ENCODE measurements at regions of chr1 and their contacts with region 1.

Region 1: GRCh38 chr1:154335025-154335714 is 9.8 kb downstream of the ATP8B2 start:
- H3K4me3 ChIP-seq: no peak overlapping the region
- H3K27ac ChIP-seq: no peak overlapping the region
- H3K4me1 ChIP-seq: no peaks in the 10 kb centered on the region
- CTCF ChIP-seq: peak; percentile 44; the same call in 1 of the 2 replicates

Region 2: DNA sequence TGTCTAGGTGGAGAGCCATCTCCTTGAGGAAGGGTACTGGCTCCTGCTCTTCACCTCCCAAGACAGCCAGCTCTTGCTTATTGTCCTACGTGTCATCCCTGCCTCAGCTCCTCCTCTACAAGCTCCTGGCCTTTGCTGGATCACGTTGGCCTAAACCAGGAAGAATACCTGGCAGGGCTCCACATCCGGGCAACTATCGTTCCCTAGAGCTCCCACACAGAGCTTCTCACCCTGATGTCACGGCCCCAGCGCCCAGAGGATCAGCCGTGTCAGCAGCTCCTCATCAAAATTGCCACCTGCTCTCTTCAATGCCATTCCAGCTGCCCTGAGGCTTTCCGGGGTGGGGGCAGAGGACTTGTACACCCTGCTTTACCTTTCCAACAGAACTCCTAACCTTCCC is 141.3 kb before region 1 on chr1:
- CTCF ChIA-PET with region 1: interaction called, 20 read pairs
- POLR2A ChIA-PET with region 1: no interaction called
- H3K4me3 ChIP-seq: no peak overlapping the region
- H3K27ac ChIP-seq: no peak overlapping the region
- H3K4me1 ChIP-seq: peaks cover 6% of the 10 kb centered on the region
- CTCF ChIP-seq: no peak

Region 3: GRCh38 chr1:154272217-154272998 is 62.8 kb before region 1 on chr1 and contains the start of gene HAX1:
- CTCF ChIA-PET with region 1: interaction called, 39 read pairs
- POLR2A ChIA-PET with region 1: interaction called, 3 read pairs
- H3K4me3 ChIP-seq: peak within 1 kb of the TSS; percentile 80
- H3K27ac ChIP-seq: peak within 1 kb of the TSS; percentile 62; the same call in 1 of the 2 replicates
- H3K4me1 ChIP-seq: no peaks in the 10 kb centered on the region
- CTCF ChIP-seq: peak; percentile 93

Region 4: GRCh38 chr1:154316704-154317103 is 18.5 kb before region 1 on chr1:
- CTCF ChIA-PET with region 1: interaction called, 10 read pairs
- POLR2A ChIA-PET with region 1: no interaction called
- H3K4me3 ChIP-seq: no peak overlapping the region
- H3K27ac ChIP-seq: no peak overlapping the region
- H3K4me1 ChIP-seq: no peaks in the 10 kb centered on the region
- CTCF ChIP-seq: no peak

Region 5: GRCh38 chr1:154344977-154345837 is 10.0 kb after region 1 on chr1:
- CTCF ChIA-PET with region 1: interaction called, 43 read pairs
- POLR2A ChIA-PET with region 1: interaction called, 5 read pairs
- H3K4me3 ChIP-seq: no peak overlapping the region
- H3K27ac ChIP-seq: no peak overlapping the region
- H3K4me1 ChIP-seq: no peaks in the 10 kb centered on the region
- CTCF ChIP-seq: peak; percentile 33; the same call in 1 of the 2 replicates

Region 6: GRCh38 chr1:154436433-154436832 is 101.3 kb after region 1 on chr1:
- CTCF ChIA-PET with region 1: interaction called, 13 read pairs
- POLR2A ChIA-PET with region 1: no interaction called
- H3K4me3 ChIP-seq: no peak overlapping the region
- H3K27ac ChIP-seq: no peak overlapping the region
- H3K4me1 ChIP-seq: no peaks in the 10 kb centered on the region
- CTCF ChIP-seq: no peak